Right cardiac atrium (tissue), 5 donors: ENCODE measurements at regions of chr2 and their contacts with region 1.

Region 1: DNA sequence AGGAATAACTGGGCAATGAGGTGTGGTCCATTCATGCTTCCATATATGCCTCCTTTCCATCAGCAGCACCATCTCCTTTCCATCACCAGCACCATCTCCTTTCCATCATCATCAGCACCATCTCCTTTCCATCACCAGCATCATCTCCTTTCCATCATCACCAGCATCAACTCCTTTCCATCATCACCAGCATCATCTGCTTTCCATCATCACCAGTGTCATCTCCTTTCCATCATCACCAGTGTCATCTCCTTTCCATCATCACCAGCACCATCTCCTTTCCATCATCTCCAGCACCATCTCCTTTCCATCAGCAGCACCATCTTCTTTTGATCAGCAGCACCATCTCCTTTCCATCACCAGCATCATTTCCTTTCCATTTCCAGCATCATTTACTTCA is 297.5 kb upstream of the SPHKAP start:
- DNase-seq: no peak
- ATAC-seq: no peak
- H3K4me3 ChIP-seq: no peak overlapping the region
- H3K27ac ChIP-seq: no peak overlapping the region
- H3K4me1 ChIP-seq: no peaks in the 10 kb centered on the region
- H3K27me3 ChIP-seq: no peaks in the 10 kb centered on the region

Region 2: GRCh38 chr2:228401065-228401912 is 77.7 kb before region 1 on chr2:
- intact Hi-C with region 1: no loop called
- DNase-seq: no peak
- ATAC-seq: no peak
- H3K4me3 ChIP-seq: no peak overlapping the region
- H3K27ac ChIP-seq: no peak overlapping the region
- H3K4me1 ChIP-seq: no peaks in the 10 kb centered on the region
- H3K27me3 ChIP-seq: no peaks in the 10 kb centered on the region

Region 3: DNA sequence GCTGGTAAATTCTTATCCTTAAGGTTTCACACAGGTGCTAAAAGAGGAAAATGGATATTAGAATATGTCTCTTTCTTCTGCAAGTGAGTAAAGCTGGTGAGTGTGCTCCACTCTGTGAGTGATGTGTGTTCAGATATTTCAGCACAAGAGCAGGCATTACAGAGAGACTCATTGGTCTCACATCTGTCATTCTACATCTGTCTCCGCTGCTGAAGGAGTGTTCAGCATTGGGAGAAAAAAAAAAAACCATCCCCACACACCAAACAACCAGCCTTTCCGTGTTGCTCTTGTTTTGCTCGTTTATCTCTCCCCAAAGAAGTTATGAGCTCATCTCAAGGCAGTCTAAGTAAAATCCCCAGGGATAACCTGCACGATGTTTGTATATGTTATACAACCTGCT is 13.6 kb before region 1 on chr2:
- intact Hi-C with region 1: loop called in 1 of 4 experiments (anchors 2 kb)
- DNase-seq: no peak
- ATAC-seq: no peak
- H3K4me3 ChIP-seq: no peak overlapping the region
- H3K27ac ChIP-seq: no peak overlapping the region
- H3K4me1 ChIP-seq: no peaks in the 10 kb centered on the region
- H3K27me3 ChIP-seq: no peaks in the 10 kb centered on the region

Region 4: DNA sequence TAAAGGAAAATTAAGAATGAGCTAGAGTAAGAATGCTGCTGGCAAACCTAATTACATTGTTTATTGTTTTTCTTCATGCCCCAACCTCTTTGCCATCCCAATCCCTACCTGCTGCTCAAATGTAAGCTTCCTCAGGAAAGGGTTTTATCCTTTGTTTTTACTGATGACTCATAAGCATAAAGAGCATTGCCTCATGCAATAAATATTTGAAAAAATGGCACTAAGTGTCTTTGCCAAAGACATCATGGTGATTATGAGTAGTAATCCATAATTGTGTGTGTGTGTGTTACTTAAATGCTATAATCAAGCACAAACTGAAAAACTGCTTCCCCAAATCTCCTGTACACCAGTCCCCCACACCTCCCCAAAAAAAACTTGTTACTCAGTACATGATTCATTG is 1181.9 kb after region 1 on chr2:
- intact Hi-C with region 1: no loop called
- DNase-seq: no peak
- ATAC-seq: no peak
- H3K4me3 ChIP-seq: no peak overlapping the region
- H3K27ac ChIP-seq: no peak overlapping the region
- H3K4me1 ChIP-seq: no peaks in the 10 kb centered on the region
- H3K27me3 ChIP-seq: no peaks in the 10 kb centered on the region